IMR-90 (cell line): ENCODE measurements at regions of chr7 and their contacts with region 1.

Region 1: GRCh38 chr7:149245244-149245643 is 5.8 kb downstream of the ZNF212 start:
- DNase-seq: peak; percentile 62
- ATAC-seq: peak; percentile 65
- H3K4me3 ChIP-seq: no peak overlapping the region
- H3K27ac ChIP-seq: no peak overlapping the region
- H3K4me1 ChIP-seq: peaks cover 10% of the 10 kb centered on the region
- H3K27me3 ChIP-seq: no peaks in the 10 kb centered on the region
- CTCF ChIP-seq: no peak
- POLR2A ChIP-seq: no peak
- RAD21 ChIP-seq: no peak

Region 2: GRCh38 chr7:149261829-149262617 is 16.8 kb after region 1 on chr7 and contains the start of gene ZNF783:
- CTCF ChIA-PET with region 1: interaction called, 10 read pairs
- POLR2A ChIA-PET with region 1: no interaction called
- dilution Hi-C with region 1: no loop called
- in situ Hi-C with region 1: no loop called
- intact Hi-C with region 1: loop called (anchors 1 kb)
- DNase-seq: peak; percentile 85
- ATAC-seq: peak; percentile 94
- H3K4me3 ChIP-seq: peak within 1 kb of the TSS; percentile 61
- H3K27ac ChIP-seq: peak within 1 kb of the TSS; percentile 54
- H3K4me1 ChIP-seq: peaks cover 7% of the 10 kb centered on the region
- H3K27me3 ChIP-seq: no peaks in the 10 kb centered on the region
- CTCF ChIP-seq: peak; percentile 81
- POLR2A ChIP-seq: no peak
- RAD21 ChIP-seq: peak; percentile 44
- total RNA-seq, gene ZNF783: 2.3 and 2.8 TPM in 2 replicates